Activated CD4-positive, alpha-beta T cell treated with anti-CD3 and anti-CD28 coated beads, Interleukin-2, amount 10 ng/mL, durations not matched to agents 7 days and 5 days (primary cell): ENCODE measurements at regions of chr1 and their contacts with region 1.

Region 1: GRCh38 chr1:109493805-109494539 is at the start of gene CYB561D1:
- DNase-seq: peak; percentile 91
- H3K4me3 Mint-ChIP-seq: peak within 1 kb of the TSS; percentile 98
- H3K27ac Mint-ChIP-seq: peak within 1 kb of the TSS; percentile 89
- H3K4me1 Mint-ChIP-seq: peaks cover 56% of the 10 kb centered on the region
- H3K27me3 Mint-ChIP-seq: no peaks in the 10 kb centered on the region
- total RNA-seq, gene CYB561D1: 25.3 to 29.7 TPM

Region 2: DNA sequence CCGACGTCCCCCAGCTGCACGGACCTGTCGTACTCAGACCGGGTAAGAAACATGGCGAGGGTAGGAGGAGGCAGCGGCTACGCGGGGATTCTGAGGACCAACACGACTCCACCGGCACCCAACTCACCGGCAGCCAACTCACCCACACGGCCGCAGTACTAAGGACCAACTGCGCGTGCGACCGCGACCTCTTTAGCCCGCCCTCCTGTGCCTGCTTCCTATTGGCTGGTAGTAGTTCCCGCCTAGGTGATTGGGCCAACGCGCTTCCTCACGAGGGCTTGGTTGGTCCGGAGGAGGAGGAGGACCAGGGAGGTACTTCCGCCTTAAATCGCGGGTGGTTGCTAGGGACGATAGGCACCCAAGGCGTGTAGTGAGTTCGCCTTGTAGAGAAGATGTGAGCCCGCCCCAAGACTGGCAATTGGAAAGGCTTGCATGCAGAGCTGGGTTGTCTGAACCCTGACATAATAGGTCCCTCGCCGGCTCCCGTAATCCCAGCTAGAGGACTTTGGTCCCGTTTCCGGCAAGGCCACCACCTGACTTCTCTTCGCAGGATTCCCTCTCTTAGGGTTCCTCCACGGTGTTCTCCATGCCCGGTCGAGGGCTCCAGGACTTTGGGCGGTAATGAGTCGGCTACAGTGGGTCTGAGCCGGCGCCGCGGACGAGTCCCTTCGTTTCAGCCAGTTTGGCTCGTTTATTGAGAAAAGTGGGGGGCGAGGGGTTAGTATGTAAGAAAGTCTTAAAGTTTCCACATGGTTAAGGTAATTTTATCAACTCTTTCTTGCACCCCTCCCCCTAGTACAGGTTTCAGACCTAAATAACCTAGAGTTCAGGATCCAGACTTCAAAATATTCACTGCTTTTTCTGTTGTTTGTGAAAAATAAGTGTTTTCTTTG is 67.4 kb before region 1 on chr1 and contains the start of gene PSMA5:
- CTCF ChIA-PET with region 1: interaction called, 12 read pairs
- POLR2A ChIA-PET with region 1: no interaction called
- DNase-seq: peak; percentile 98
- H3K4me3 Mint-ChIP-seq: peak within 1 kb of the TSS; percentile 94
- H3K27ac Mint-ChIP-seq: peak within 1 kb of the TSS; percentile 97
- H3K4me1 Mint-ChIP-seq: peaks cover 39% of the 10 kb centered on the region
- H3K27me3 Mint-ChIP-seq: no peaks in the 10 kb centered on the region
- total RNA-seq, gene PSMA5: 157 to 174 TPM

Region 3: DNA sequence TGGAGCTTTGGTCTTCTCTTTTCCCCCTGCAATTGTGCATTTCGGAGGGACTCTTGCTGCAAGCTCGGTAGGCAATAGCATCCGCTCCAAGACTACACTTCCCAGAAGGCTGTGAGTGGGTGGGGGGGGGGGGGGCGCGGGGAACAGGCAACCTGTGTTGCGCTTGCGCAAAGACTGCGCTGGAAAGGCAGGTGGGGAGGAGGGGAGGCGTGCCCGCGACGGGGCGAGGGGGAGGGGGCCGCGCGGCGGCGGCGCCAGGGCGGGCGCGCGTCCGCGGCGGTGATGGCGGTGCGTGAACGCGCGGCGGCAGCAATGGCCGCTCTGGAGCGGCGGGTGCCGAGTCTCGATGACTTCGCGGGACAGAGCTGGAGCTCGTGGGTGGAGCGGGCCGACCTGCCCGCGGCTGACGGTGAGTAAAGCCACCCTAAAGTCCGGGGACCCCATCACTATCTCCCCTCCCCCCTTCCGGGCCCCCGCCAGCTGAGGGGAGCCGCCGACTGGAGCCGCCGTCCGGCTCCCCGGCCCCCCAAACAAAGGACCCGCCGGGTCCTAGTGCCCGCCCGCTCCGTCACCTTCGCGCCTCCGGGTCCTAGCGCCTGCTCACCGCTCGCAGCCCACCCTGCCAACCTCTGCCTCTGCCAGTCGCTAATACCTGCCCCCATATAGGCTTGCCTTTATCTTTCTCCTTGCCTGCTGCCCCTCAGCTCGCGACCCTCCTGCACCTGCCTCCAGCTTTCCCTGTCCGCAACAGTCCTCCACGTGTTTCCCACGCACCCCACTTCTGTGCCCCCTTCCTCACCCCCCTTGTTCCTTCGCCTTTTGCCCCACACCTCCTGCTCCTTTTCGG is 10.1 kb before region 1 on chr1 and contains the start of gene ATXN7L2:
- CTCF ChIA-PET with region 1: interaction called, 35 read pairs
- POLR2A ChIA-PET with region 1: interaction called, 5 read pairs
- DNase-seq: peak; percentile 93
- H3K4me3 Mint-ChIP-seq: peak within 1 kb of the TSS; percentile 89
- H3K27ac Mint-ChIP-seq: peak within 1 kb of the TSS; percentile 94
- H3K4me1 Mint-ChIP-seq: peaks cover 42% of the 10 kb centered on the region
- H3K27me3 Mint-ChIP-seq: peaks cover 16% of the 10 kb centered on the region
- total RNA-seq, gene ATXN7L2: 12.4 to 14.0 TPM